Activated B cell treated with CpG ODN at 0.5 μM for 24 hours (primary cell): ENCODE measurements at regions of chr17 and their contacts with region 1.

Region 1: DNA sequence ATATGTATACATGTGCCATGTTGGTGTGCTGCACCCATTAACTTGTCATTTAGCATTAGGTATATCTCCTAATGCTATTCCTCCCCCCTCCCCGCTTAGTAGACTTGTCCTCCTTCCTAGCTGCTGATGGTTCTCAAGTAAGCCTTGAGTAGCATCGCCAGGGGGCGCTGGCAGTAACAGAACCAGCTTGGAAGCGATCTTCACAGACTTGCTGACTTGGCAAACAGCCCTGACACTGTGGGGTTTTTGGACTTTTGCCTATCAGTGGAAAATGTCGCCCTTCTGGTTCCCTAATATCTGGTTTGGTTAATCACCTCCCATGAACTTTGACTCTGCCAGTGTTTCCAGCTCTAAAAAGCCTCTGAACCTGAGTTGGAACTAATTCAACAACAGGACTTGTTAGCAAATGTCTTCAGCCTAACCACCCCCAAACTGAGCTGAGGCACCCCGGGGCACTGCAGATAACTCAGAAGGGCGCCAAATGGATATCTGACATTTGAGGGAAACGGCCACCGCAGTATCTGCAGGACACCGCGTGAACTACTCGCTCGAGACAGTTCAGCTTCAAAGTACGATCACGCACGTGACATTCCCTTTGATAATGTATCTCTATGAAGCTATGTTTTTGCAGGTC is 15.4 kb upstream of the SPATA32 start:
- DNase-seq: peak; percentile 76
- ATAC-seq: peak; percentile 98
- H3K4me3 Mint-ChIP-seq: no peak overlapping the region
- H3K27ac Mint-ChIP-seq: peak overlapping the region; percentile 21
- H3K4me1 Mint-ChIP-seq: peaks cover 5% of the 10 kb centered on the region
- H3K27me3 Mint-ChIP-seq: no peaks in the 10 kb centered on the region
- CTCF ChIP-seq: no peak

Region 2: DNA sequence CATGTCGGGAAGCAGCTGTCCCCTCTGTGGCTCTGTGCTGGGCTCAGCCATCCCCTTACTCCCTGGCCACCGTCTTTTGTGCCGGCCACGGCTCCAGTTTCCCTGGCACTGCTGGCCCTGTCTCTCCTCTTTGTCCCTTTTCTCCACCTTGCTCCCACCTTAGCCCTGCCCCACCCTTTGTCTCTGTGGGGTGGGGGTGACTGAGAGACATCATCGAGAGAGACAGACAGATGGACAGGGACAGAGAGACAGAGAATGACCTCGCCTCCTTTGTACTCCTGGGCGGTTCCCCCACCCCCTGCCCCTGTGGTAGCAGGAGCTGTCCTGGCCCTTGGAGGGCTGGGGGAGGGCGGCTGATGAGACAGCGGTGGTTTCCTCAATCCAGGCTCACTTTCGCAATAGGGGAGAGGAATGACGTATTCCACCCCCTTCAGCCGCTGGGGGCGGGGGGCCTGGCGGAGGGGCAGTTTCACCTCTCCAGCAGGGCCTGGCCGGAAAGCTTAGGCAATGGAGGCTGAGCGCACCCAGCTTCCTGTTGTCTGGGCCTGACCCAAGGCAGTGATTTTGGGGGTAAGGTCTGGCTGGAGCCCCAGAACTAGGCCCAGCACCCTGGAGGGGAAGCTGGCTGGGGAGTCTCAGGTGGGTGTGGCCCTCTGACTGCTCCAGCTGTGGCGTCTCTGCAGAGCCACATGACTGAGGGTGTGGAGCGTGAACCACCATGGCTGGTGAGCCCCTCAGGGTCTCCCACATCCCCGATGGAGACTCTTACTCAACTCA is 48.4 kb before region 1 on chr17:
- CTCF ChIA-PET with region 1: interaction called, 12 read pairs
- POLR2A ChIA-PET with region 1: no interaction called
- intact Hi-C with region 1: no loop called
- DNase-seq: peak; percentile 84
- ATAC-seq: peak; percentile 45
- H3K4me3 Mint-ChIP-seq: peak overlapping the region; percentile 79
- H3K27ac Mint-ChIP-seq: peak overlapping the region; percentile 99
- H3K4me1 Mint-ChIP-seq: peaks cover 97% of the 10 kb centered on the region
- H3K27me3 Mint-ChIP-seq: no peaks in the 10 kb centered on the region
- CTCF ChIP-seq: no peak

Region 3: DNA sequence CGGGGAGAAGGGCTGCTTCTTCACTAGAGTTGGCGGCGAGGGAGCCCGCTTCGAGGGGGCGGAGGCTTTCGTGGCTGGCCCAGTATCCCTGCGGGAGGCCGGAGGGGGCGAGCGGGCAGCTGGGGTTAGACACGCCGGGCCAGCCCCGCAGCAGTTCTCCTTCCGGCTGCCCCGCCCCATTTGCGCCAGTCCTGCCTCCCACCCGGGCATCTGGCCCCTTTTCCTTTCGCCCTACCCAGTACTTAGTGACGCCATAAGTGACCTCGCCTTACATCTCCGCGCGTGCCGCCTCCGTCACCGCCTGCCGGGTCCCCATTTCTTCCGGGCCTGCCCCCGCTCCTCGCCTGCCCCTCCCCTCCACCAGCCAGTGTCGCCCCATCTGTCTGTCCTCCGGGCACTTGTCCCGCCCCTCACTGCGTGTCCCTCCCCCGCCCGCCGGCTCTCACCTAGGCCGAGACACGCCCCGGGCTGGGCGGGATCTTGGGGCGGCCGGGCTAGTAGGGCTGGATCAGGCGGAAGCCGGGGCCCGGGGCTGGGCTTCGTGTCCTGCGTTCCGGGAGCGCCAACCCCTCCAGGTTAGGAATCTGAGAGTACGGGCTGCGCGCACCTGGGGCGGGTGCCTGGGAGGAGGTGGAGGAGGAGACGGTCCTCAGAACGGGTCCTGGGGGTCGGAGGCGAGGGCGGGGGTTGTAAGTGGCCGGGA is 29.8 kb before region 1 on chr17:
- CTCF ChIA-PET with region 1: interaction called, 5 read pairs
- POLR2A ChIA-PET with region 1: interaction called, 10 read pairs
- intact Hi-C with region 1: no loop called
- DNase-seq: peak; percentile 87
- ATAC-seq: peak; percentile 92
- H3K4me3 Mint-ChIP-seq: peak overlapping the region; percentile 90
- H3K27ac Mint-ChIP-seq: peak overlapping the region; percentile 92
- H3K4me1 Mint-ChIP-seq: peaks cover 34% of the 10 kb centered on the region
- H3K27me3 Mint-ChIP-seq: no peaks in the 10 kb centered on the region
- CTCF ChIP-seq: no peak

Region 4: GRCh38 chr17:45293413-45294211 is 16.3 kb after region 1 on chr17:
- CTCF ChIA-PET with region 1: interaction called, 30 read pairs
- POLR2A ChIA-PET with region 1: interaction called, 22 read pairs
- intact Hi-C with region 1: loop called (anchors 2 kb)
- DNase-seq: no peak
- ATAC-seq: peak; percentile 35
- H3K4me3 Mint-ChIP-seq: peak overlapping the region; percentile 28
- H3K27ac Mint-ChIP-seq: peak overlapping the region; percentile 73
- H3K4me1 Mint-ChIP-seq: peaks cover 87% of the 10 kb centered on the region
- H3K27me3 Mint-ChIP-seq: no peaks in the 10 kb centered on the region
- CTCF ChIP-seq: no peak

Region 5: GRCh38 chr17:45385331-45385997 is 108.1 kb after region 1 on chr17:
- CTCF ChIA-PET with region 1: interaction called, 167 read pairs
- POLR2A ChIA-PET with region 1: interaction called, 16 read pairs
- intact Hi-C with region 1: loop called (anchors 1 kb)
- DNase-seq: peak; percentile 84
- ATAC-seq: peak; percentile 94
- H3K4me3 Mint-ChIP-seq: no peak overlapping the region
- H3K27ac Mint-ChIP-seq: no peak overlapping the region
- H3K4me1 Mint-ChIP-seq: peaks cover 7% of the 10 kb centered on the region
- H3K27me3 Mint-ChIP-seq: peaks cover 8% of the 10 kb centered on the region
- CTCF ChIP-seq: peak; percentile 35

Region 6: GRCh38 chr17:45410144-45411091 is 133.1 kb after region 1 on chr17:
- CTCF ChIA-PET with region 1: interaction called, 5 read pairs
- POLR2A ChIA-PET with region 1: interaction called, 12 read pairs
- intact Hi-C with region 1: no loop called
- DNase-seq: peak; percentile 62
- ATAC-seq: peak; percentile 63
- H3K4me3 Mint-ChIP-seq: peak overlapping the region; percentile 99
- H3K27ac Mint-ChIP-seq: peak overlapping the region; percentile 99
- H3K4me1 Mint-ChIP-seq: peaks cover 86% of the 10 kb centered on the region
- H3K27me3 Mint-ChIP-seq: no peaks in the 10 kb centered on the region
- CTCF ChIP-seq: no peak

Region 7: DNA sequence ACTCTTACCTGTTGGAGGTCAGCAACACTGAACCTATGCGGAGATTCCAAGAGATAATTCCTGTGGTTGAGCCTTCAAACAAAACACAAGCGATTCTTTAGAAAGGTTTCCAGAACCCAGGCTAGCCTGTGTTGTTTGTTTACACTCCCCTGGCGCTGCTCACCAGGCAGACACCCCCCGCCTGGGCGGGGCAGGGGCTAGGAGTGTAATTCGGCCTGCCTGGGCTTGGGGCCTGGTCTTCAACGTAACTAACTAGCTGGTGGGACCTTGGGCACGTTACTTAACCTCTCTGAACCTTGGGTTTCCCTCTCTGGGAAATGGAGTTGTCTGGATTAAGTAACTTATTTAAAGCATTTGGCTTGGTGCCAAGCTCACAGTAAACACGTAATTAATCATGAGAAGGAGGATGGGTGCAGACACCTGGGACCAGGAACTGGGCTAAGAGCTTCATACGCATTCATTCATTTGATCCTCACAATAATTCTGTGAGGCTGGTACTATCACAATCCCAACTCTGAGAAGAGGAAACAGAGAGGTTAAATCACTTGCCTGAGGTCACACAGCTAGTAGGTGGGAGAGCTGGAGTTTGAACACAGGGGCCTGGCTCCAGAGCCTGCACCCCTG is 162.9 kb after region 1 on chr17:
- CTCF ChIA-PET with region 1: no interaction called
- POLR2A ChIA-PET with region 1: no interaction called
- intact Hi-C with region 1: no loop called
- DNase-seq: no peak
- ATAC-seq: no peak
- H3K4me3 Mint-ChIP-seq: no peak overlapping the region
- H3K27ac Mint-ChIP-seq: no peak overlapping the region
- H3K4me1 Mint-ChIP-seq: peaks cover 13% of the 10 kb centered on the region
- H3K27me3 Mint-ChIP-seq: no peaks in the 10 kb centered on the region
- CTCF ChIP-seq: no peak